IMR-90 (cell line): ENCODE measurements at regions of chr10 and their contacts with region 1.

Region 1: GRCh38 chr10:66862687-66863258 is 63.1 kb upstream of the LRRTM3 start:
- DNase-seq: no peak
- ATAC-seq: no peak
- H3K4me3 ChIP-seq: no peak overlapping the region
- H3K27ac ChIP-seq: no peak overlapping the region
- H3K4me1 ChIP-seq: no peaks in the 10 kb centered on the region
- H3K27me3 ChIP-seq: no peaks in the 10 kb centered on the region
- CTCF ChIP-seq: no peak
- POLR2A ChIP-seq: no peak
- RAD21 ChIP-seq: no peak

Region 2: GRCh38 chr10:66555061-66555460 is 307.7 kb before region 1 on chr10:
- CTCF ChIA-PET with region 1: no interaction called
- POLR2A ChIA-PET with region 1: interaction called, 13 read pairs
- dilution Hi-C with region 1: no loop called
- in situ Hi-C with region 1: no loop called
- intact Hi-C with region 1: no loop called
- DNase-seq: no peak
- ATAC-seq: no peak
- H3K4me3 ChIP-seq: no peak overlapping the region
- H3K27ac ChIP-seq: no peak overlapping the region
- H3K4me1 ChIP-seq: no peaks in the 10 kb centered on the region
- H3K27me3 ChIP-seq: no peaks in the 10 kb centered on the region
- CTCF ChIP-seq: no peak
- POLR2A ChIP-seq: no peak
- RAD21 ChIP-seq: no peak